ENCODE measurements at regions of chr10 and their contacts with region 1.

Region 1: GRCh38 chr10:35379226-35380137 is 43.2 kb downstream of the CCNY start:
- DNase-seq: peak; percentile 6 to 30 (median 13)
- H3K4me3 ChIP-seq: peak overlapping the region in 1 of 3 experiments; percentile 9
- H3K4me3 Mint-ChIP-seq: peak overlapping the region; percentile 7 to 58
- H3K27ac ChIP-seq: peak overlapping the region in 1 of 2 donors; percentile 66
- H3K27ac Mint-ChIP-seq: peak overlapping the region; percentile 51 to 89 (median 72)
- H3K4me1 ChIP-seq: peaks cover 29 to 37% of the 10 kb centered on the region in 2 donors
- H3K4me1 Mint-ChIP-seq: peaks cover 58% of the 10 kb centered on the region
- H3K27me3 ChIP-seq: no peaks in the 10 kb centered on the region
- H3K27me3 Mint-ChIP-seq: no peaks in the 10 kb centered on the region
- CTCF ChIP-seq: no peak

Region 2: DNA sequence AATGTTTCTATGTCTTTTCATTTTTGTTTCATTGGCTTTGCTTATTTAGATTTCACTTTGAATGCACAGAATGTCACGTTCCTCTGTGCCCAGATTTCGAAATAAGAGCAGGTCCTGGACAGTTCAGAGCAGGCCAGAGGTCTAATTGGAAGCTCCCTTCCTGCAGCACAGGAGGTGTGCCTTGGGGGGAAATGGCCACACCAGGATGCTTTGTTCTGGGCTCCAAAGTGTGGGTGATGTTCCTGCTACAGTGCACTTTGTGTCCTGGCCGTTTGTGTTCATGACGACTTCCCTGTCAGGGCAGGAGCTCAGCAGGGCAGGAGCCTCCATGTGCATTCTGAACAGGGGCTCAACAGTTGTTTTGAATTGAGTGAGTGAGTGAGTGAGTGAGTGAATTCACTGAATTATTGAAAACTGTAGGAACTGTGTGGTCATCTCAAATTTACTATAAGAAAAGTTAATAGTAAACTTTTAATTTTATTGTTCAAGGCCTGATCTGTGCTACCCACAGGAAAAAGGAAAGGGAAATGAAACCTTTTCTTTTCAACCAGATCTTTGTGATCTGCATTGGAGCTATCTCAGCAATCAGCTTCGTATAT is 116.1 kb after region 1 on chr10:
- intact Hi-C with region 1: loop called in 1 of 2 experiments (anchors 10 kb)
- DNase-seq: peak in 2 of 3 donors; percentile 12 to 20
- H3K4me3 ChIP-seq: peak overlapping the region in 1 of 3 experiments; percentile 22
- H3K4me3 Mint-ChIP-seq: peak overlapping the region; percentile 39 to 76
- H3K27ac ChIP-seq: peak overlapping the region; percentile 48 to 67
- H3K27ac Mint-ChIP-seq: peak overlapping the region; percentile 59 to 95 (median 94)
- H3K4me1 ChIP-seq: peaks cover 30 to 36% of the 10 kb centered on the region in 2 donors
- H3K4me1 Mint-ChIP-seq: peaks cover 59% of the 10 kb centered on the region
- H3K27me3 ChIP-seq: no peaks in the 10 kb centered on the region
- H3K27me3 Mint-ChIP-seq: peaks cover 0 to 3% (median 2%) of the 10 kb centered on the region in 3 donors
- CTCF ChIP-seq: no peak

Measured in CD14-positive monocyte (primary cell).